AG04449 (cell line): ENCODE measurements at regions of chr6 and their contacts with region 1.

Region 1: DNA sequence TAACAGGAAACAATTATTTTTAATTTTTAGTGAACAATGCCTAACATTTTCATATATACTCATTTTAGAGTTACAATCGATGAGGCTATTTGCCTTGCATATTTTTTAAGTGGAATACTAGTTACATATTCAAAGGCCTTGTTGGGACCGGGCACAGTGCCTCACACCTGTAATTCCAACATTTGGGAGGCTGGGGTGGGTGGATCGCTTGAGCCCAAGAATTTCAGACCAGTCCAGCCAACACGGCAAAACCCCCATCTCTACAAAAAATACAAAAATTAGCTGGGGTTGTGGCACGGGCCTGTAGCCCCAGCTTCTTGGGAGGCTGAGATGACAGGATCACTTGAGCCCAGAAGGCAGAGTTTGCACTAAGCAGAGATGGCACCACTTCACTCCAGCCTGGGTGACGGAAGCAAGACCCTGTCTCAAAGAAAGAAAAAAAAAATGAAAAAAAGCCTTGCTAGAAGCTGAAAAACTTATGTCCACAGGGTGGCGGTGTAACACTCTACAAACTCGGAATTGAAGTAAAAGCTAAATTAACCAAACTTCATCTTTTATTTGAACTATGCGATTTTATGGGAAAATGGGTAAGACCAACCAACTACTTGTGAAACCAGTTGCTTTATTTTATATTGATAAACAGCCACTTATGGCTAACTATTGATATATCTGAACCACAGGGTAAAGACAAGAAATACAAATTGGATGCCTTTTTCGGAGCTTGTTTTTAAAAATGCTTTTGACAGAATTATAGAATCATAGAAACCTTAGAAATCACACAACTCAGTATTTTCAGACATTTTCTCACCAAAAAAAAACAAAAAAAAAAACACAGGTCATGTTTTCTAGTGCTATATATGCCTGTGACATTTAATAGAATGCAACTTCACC is 24.1 kb upstream of the ROS1 start:
- DNase-seq: no peak
- H3K4me3 ChIP-seq: no peak overlapping the region
- CTCF ChIP-seq: peak; percentile 36

Region 2: DNA sequence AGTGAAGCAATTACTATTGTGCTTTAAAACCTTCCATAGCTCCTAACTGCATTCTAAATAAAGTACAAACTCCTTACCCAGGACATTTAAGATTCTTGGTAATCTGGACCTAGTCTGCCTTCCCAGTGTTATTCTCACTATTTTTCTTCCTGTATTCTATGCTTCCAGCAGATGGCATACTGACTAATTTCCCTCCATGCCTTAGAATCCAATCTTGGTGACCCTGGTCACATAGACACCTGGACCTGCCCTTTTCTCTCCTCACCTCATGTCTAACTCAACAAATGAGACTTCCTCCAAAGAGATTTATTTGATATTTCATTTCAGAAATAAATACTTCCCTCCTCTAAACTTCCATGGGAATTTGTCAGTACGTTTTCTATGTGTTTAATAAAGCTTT is 49.9 kb before region 1 on chr6:
- CTCF ChIA-PET with region 1: interaction called, 19 read pairs
- POLR2A ChIA-PET with region 1: no interaction called
- DNase-seq: no peak
- H3K4me3 ChIP-seq: no peak overlapping the region
- CTCF ChIP-seq: peak; percentile 10

Region 3: GRCh38 chr6:117481278-117481925 is 31.6 kb after region 1 on chr6:
- CTCF ChIA-PET with region 1: interaction called, 13 read pairs
- POLR2A ChIA-PET with region 1: interaction called, 3 read pairs
- DNase-seq: no peak
- H3K4me3 ChIP-seq: no peak overlapping the region
- CTCF ChIP-seq: no peak

Region 4: DNA sequence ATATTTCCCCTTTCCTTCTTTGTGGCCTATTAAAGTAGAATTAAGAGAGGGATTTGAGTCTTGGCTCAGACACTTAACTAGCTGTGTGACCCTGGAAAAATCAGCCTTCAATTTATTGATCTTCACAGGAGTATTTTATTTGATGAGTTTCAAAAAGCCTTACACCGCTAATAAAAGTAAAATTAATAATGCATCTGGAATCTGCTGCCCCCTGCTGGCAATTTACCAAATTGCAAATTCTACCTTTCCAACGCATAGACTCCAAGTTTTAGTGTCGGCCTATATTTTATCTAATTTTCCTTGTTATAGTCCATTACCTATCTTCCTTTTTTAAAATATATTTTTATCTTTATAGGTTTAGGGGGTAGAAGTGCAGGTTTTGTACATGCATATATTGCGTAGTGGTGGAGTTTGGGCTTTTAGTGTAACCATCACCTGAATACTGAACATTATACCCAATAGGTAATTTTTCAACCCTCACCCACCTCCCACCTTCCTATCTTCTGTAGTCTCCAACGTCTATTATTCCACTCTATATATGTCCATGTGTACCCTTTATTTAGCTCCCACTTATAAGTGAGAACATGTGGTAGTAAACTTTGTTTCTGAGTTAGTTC is 106.2 kb after region 1 on chr6:
- CTCF ChIA-PET with region 1: interaction called, 273 read pairs
- POLR2A ChIA-PET with region 1: interaction called, 4 read pairs
- DNase-seq: no peak
- H3K4me3 ChIP-seq: no peak overlapping the region
- CTCF ChIP-seq: peak; percentile 46

Region 5: GRCh38 chr6:117568831-117569410 is 119.1 kb after region 1 on chr6:
- CTCF ChIA-PET with region 1: interaction called, 16 read pairs
- POLR2A ChIA-PET with region 1: no interaction called
- DNase-seq: no peak
- H3K4me3 ChIP-seq: no peak overlapping the region
- CTCF ChIP-seq: no peak

Region 6: DNA sequence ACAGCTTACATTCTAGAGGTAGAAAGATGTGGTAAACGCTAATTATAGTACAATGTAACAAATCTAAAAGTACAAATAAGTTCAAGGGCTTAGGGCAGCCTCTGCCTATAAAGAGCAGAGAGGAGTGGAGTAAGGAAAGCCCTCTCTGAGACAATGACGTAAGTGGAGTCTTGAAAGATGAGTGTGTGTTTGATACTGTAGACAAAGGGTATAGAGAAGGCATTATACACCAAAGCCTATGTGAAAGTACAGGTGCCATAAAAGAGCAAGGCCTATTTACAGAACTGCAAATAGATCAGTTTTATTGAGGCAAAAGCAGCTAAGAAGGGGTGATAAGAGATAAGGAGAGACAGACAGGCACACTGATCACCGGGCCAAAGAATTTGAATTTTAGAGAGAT is 141.6 kb after region 1 on chr6:
- CTCF ChIA-PET with region 1: interaction called, 11 read pairs
- POLR2A ChIA-PET with region 1: no interaction called
- DNase-seq: no peak
- H3K4me3 ChIP-seq: no peak overlapping the region
- CTCF ChIP-seq: no peak

Region 7: DNA sequence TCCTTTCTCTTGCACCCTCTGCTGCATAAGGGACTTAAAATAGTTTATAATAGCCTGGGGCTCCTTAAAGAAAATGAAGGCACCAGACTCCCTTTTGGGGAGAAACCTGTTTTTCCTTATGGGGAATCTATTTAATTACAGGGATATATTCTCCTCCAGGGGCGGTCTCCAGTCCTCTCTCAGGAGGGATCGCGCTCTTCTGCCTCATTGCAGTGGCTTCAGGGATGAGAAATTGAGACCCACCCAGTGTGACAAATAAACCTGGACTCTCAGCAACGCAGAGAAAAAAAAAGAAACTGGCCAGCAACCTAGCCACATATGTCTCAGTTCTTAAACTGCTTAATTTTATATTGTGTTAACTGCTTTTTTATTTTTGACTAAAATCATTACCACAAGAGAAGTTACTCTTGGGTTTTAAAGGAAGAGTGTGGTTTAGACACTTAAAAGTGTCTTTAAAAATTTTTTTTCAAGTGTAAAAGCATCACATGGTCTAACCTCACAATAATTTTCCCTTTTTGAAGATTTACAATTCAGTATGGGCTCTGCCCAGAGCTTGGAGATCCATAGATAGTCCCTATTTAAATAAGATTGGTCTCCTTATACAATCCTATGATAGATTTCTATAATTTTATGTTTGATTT is 164.2 kb after region 1 on chr6:
- CTCF ChIA-PET with region 1: interaction called, 205 read pairs
- POLR2A ChIA-PET with region 1: no interaction called
- DNase-seq: no peak
- H3K4me3 ChIP-seq: no peak overlapping the region
- CTCF ChIP-seq: no peak